CD4-positive, alpha-beta T cell (primary cell): ENCODE measurements at regions of chr22 and their contacts with region 1.

Region 1: DNA sequence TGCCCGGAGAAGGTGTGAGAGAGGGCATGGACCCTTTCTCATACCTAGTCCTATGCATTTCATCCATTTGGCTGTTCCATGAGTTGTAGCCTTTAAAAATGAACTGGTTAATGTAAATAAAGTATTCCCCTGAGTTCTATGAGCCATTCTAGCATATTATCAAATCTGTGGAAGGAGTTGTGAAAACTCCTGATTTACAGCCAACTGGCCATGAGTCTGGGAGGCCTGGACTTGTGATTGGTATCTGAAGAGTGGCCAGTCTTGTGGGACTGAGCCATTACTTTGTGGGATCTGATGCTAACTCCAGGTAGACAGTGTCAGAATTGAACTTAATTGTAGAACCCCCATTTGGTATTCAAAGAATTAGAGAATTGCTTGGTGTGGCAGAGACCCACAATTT is 48.4 kb downstream of the FAM118A start:
- DNase-seq: no peak
- ATAC-seq: no peak
- H3K4me3 ChIP-seq: no peak overlapping the region
- H3K4me3 Mint-ChIP-seq: no peak overlapping the region
- H3K27ac ChIP-seq: no peak overlapping the region
- H3K27ac Mint-ChIP-seq: no peak overlapping the region
- H3K4me1 ChIP-seq: no peaks in the 10 kb centered on the region
- H3K4me1 Mint-ChIP-seq: no peaks in the 10 kb centered on the region
- H3K27me3 ChIP-seq: no peaks in the 10 kb centered on the region
- H3K27me3 Mint-ChIP-seq: no peaks in the 10 kb centered on the region
- CTCF ChIP-seq: no peak

Region 2: GRCh38 chr22:45290410-45290936 is 67.7 kb before region 1 on chr22:
- CTCF ChIA-PET with region 1: no interaction called
- POLR2A ChIA-PET with region 1: no interaction called
- intact Hi-C with region 1: loop called in 1 of 2 experiments (anchors 10 kb)
- DNase-seq: peak in 2 of 14 experiments; percentile 14 to 30
- ATAC-seq: no peak
- H3K4me3 ChIP-seq: no peak overlapping the region
- H3K4me3 Mint-ChIP-seq: no peak overlapping the region
- H3K27ac ChIP-seq: no peak overlapping the region
- H3K27ac Mint-ChIP-seq: no peak overlapping the region
- H3K4me1 ChIP-seq: peaks cover 13% of the 10 kb centered on the region
- H3K4me1 Mint-ChIP-seq: no peaks in the 10 kb centered on the region
- H3K27me3 ChIP-seq: no peaks in the 10 kb centered on the region
- H3K27me3 Mint-ChIP-seq: no peaks in the 10 kb centered on the region
- CTCF ChIP-seq: no peak